ENCODE measurements at regions of chr12 and their contacts with region 1.

Region 1: GRCh38 chr12:32139064-32139421 is 32.4 kb downstream of the BICD1 start:
- DNase-seq: peak; percentile 89
- ATAC-seq: peak; percentile 84
- H3K4me3 ChIP-seq: peak overlapping the region; percentile 32 to 72 (median 55)
- H3K4me3 Mint-ChIP-seq: peak overlapping the region; percentile 95
- H3K27ac ChIP-seq: peak overlapping the region; percentile 95 to 97
- H3K27ac Mint-ChIP-seq: peak overlapping the region; percentile 99
- H3K4me1 ChIP-seq: peaks cover 31 to 39% of the 10 kb centered on the region in 2 donors
- H3K4me1 Mint-ChIP-seq: peaks cover 57% of the 10 kb centered on the region
- H3K27me3 ChIP-seq: no peaks in the 10 kb centered on the region
- H3K27me3 Mint-ChIP-seq: no peaks in the 10 kb centered on the region
- CTCF ChIP-seq: no peak

Region 2: DNA sequence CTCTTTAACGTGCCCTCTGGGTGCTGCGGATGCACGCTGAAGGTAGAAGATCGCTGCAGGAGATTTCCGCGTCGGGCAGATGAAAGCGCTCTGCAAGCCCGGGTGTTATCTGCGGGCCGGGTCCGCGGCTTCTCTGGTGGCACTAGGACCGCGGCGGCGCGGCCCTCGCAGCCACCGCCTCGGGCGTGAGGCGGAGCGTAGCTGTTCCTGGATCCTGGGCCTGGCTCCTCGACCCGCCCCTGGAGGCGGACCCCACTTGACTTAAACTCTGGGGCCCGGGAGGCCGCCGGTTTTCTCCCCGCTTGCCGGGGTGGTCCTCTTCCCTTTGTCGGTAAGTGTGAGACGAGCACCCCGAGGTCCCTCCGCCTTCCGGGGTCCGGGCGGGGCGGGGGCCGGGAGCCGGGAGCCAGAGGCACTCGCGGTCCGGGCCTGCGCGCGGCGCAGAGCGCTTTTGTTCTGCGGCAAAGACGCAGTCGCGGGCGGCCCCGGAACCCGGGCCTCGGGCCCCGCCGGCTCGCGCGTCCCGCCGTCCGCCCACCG is 179.8 kb before region 1 on chr12 and contains the start of gene RESF1:
- CTCF ChIA-PET with region 1: no interaction called
- POLR2A ChIA-PET with region 1: no interaction called
- intact Hi-C with region 1: loop called (anchors 10 kb)
- DNase-seq: peak; percentile 91
- ATAC-seq: peak; percentile 85
- H3K4me3 ChIP-seq: peak within 1 kb of the TSS; percentile 65 to 98 (median 70)
- H3K4me3 Mint-ChIP-seq: peak within 1 kb of the TSS; percentile 96
- H3K27ac ChIP-seq: peak within 1 kb of the TSS; percentile 79 to 82
- H3K27ac Mint-ChIP-seq: peak within 1 kb of the TSS; percentile 96
- H3K4me1 ChIP-seq: peaks cover 49 to 50% of the 10 kb centered on the region in 2 donors
- H3K4me1 Mint-ChIP-seq: peaks cover 68% of the 10 kb centered on the region
- H3K27me3 ChIP-seq: no peaks in the 10 kb centered on the region
- H3K27me3 Mint-ChIP-seq: no peaks in the 10 kb centered on the region
- CTCF ChIP-seq: no peak
- total RNA-seq, gene RESF1: 350 and 352 TPM in 2 replicates

Region 3: DNA sequence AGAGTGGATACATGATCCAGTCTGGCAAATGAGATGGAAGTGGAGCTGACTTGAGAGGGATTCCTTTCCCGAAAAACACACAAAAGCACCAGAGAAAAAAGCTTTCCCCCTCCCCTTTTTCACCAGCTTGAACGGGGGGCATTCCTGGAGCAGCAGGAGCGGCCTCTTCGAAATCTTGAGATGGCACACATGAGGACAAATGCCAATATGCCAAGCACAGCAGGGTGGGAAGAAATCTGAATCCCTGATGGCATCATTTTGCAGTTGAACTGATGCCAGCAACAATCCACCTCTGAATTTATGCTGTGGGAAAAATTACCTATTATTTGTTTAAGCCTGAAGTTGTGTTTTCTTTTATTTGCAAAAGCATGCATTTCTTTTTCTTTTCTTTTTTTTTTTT is 62.1 kb before region 1 on chr12:
- CTCF ChIA-PET with region 1: no interaction called
- POLR2A ChIA-PET with region 1: no interaction called
- intact Hi-C with region 1: no loop called
- DNase-seq: no peak
- ATAC-seq: no peak
- H3K4me3 ChIP-seq: no peak overlapping the region
- H3K4me3 Mint-ChIP-seq: no peak overlapping the region
- H3K27ac ChIP-seq: no peak overlapping the region
- H3K27ac Mint-ChIP-seq: no peak overlapping the region
- H3K4me1 ChIP-seq: no peaks in the 10 kb centered on the region
- H3K4me1 Mint-ChIP-seq: no peaks in the 10 kb centered on the region
- H3K27me3 ChIP-seq: no peaks in the 10 kb centered on the region
- H3K27me3 Mint-ChIP-seq: no peaks in the 10 kb centered on the region
- CTCF ChIP-seq: no peak

Region 4: GRCh38 chr12:32106517-32107358 is 32.3 kb before region 1 on chr12 and contains the start of gene BICD1:
- CTCF ChIA-PET with region 1: interaction called, 5 read pairs
- POLR2A ChIA-PET with region 1: interaction called, 8 read pairs
- intact Hi-C with region 1: loop called (anchors 1 kb)
- DNase-seq: peak; percentile 80
- ATAC-seq: peak; percentile 82
- H3K4me3 ChIP-seq: peak within 1 kb of the TSS; percentile 43 to 95 (median 80)
- H3K4me3 Mint-ChIP-seq: peak within 1 kb of the TSS; percentile 93
- H3K27ac ChIP-seq: peak within 1 kb of the TSS; percentile 15 to 86
- H3K27ac Mint-ChIP-seq: peak within 1 kb of the TSS; percentile 97
- H3K4me1 ChIP-seq: peaks cover 19 to 20% of the 10 kb centered on the region in 2 donors
- H3K4me1 Mint-ChIP-seq: peaks cover 30% of the 10 kb centered on the region
- H3K27me3 ChIP-seq: no peaks in the 10 kb centered on the region
- H3K27me3 Mint-ChIP-seq: no peaks in the 10 kb centered on the region
- CTCF ChIP-seq: peak; percentile 23
- total RNA-seq, gene BICD1: 93.1 and 93.5 TPM in 2 replicates

Region 5: GRCh38 chr12:32257695-32258496 is 118.9 kb after region 1 on chr12:
- CTCF ChIA-PET with region 1: no interaction called
- POLR2A ChIA-PET with region 1: no interaction called
- intact Hi-C with region 1: no loop called
- DNase-seq: no peak
- ATAC-seq: no peak
- H3K4me3 ChIP-seq: no peak overlapping the region
- H3K4me3 Mint-ChIP-seq: no peak overlapping the region
- H3K27ac ChIP-seq: no peak overlapping the region
- H3K27ac Mint-ChIP-seq: no peak overlapping the region
- H3K4me1 ChIP-seq: peaks cover 9 to 11% of the 10 kb centered on the region in 2 donors
- H3K4me1 Mint-ChIP-seq: peaks cover 31% of the 10 kb centered on the region
- H3K27me3 ChIP-seq: no peaks in the 10 kb centered on the region
- H3K27me3 Mint-ChIP-seq: no peaks in the 10 kb centered on the region
- CTCF ChIP-seq: no peak

Region 6: DNA sequence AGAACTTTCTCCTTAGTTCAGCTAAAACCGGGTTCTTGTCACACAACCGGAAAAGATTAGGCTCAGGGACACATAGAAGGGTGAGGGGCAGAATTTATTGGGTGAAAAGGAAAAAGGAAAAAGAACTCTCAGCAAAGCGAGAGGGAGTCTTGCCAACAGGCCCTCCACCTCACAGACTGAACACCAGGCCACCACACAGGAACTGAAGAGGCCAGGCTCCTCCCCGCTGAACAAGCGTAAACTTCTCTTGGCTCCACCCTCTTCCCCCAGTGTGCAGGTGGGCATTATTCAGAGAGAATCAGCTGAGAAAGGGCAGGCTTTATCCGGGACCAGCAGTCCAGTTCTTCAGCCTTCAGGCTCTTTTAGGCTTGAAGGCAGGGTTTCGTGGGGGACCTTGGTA is 134.7 kb after region 1 on chr12:
- CTCF ChIA-PET with region 1: no interaction called
- POLR2A ChIA-PET with region 1: interaction called, 4 read pairs
- intact Hi-C with region 1: loop called (anchors 1 kb)
- DNase-seq: peak; percentile 81
- ATAC-seq: peak; percentile 96
- H3K4me3 ChIP-seq: peak overlapping the region in 2 of 5 experiments; percentile 23 to 28
- H3K4me3 Mint-ChIP-seq: peak overlapping the region; percentile 79
- H3K27ac ChIP-seq: peak overlapping the region; percentile 88 to 95
- H3K27ac Mint-ChIP-seq: peak overlapping the region; percentile 98
- H3K4me1 ChIP-seq: peaks cover 38 to 40% of the 10 kb centered on the region in 2 donors
- H3K4me1 Mint-ChIP-seq: peaks cover 36% of the 10 kb centered on the region
- H3K27me3 ChIP-seq: no peaks in the 10 kb centered on the region
- H3K27me3 Mint-ChIP-seq: no peaks in the 10 kb centered on the region
- CTCF ChIP-seq: no peak

Region 7: DNA sequence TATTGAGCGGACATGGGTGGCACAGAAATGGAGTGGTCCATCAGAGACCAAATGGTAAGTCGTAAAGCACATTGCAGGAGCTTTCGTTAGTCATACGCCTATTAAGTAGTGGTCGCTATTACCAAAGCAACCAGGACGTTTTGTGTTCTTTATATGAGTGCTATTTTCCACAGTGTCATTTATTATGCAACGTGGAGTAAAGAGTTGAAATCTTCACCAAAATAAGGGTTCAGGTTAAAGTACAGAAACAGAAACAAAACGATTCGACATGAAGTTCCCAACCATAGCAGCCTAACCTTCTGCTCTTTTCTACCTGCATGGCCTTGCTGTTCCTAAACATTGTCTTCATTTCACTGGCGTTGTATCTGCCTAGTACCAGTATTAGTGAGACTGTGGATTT is 240.2 kb after region 1 on chr12:
- CTCF ChIA-PET with region 1: no interaction called
- POLR2A ChIA-PET with region 1: no interaction called
- intact Hi-C with region 1: no loop called
- DNase-seq: no peak
- ATAC-seq: no peak
- H3K4me3 ChIP-seq: no peak overlapping the region
- H3K4me3 Mint-ChIP-seq: no peak overlapping the region
- H3K27ac ChIP-seq: no peak overlapping the region
- H3K27ac Mint-ChIP-seq: no peak overlapping the region
- H3K4me1 ChIP-seq: no peaks in the 10 kb centered on the region
- H3K4me1 Mint-ChIP-seq: no peaks in the 10 kb centered on the region
- H3K27me3 ChIP-seq: no peaks in the 10 kb centered on the region
- H3K27me3 Mint-ChIP-seq: no peaks in the 10 kb centered on the region
- CTCF ChIP-seq: no peak

Region 8: DNA sequence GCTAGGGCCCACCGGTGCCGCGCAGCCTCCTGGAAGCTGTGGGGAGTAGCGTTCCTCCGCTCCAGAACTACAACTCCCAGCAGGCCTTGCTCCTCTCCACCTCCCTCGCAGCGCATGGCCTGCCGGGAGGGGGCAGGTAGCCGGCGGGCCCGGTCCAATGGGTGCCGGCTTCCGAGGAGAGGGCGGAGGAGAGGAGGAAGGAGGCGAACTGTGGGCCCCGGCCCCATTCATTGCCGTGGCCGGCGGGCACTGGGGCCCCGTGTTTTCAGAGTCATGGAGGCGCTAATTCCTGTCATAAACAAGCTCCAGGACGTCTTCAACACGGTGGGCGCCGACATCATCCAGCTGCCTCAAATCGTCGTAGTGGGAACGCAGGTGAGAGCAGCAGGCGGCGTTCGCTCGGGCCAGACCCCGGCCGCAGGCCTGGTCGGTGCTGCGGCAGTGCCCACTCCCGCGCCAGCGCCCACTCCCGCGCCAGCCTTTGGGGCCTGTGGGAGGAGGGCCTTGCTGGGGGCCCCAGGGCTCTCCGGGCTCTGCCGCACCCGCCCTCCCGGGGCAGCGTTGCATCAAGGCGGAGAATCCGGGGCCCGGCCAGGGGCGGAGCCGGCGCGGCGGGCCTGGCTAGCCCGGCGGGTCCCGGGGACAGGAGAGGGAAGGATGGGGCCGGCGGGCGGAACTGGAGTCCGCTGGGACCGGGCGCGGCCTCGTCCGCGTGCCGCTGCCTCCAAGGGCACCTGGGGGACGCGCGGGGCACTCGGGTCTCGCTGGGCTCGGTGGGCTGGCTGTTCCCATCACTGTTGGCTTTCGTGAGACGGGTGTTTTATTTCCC is 540.3 kb after region 1 on chr12 and contains the start of gene DNM1L:
- CTCF ChIA-PET with region 1: no interaction called
- POLR2A ChIA-PET with region 1: no interaction called
- intact Hi-C with region 1: loop called (anchors 10 kb)
- DNase-seq: peak; percentile 93
- ATAC-seq: peak; percentile 96
- H3K4me3 ChIP-seq: peak within 1 kb of the TSS; percentile 62 to 92 (median 86)
- H3K4me3 Mint-ChIP-seq: peak within 1 kb of the TSS; percentile 93
- H3K27ac ChIP-seq: peak within 1 kb of the TSS; percentile 63 to 79
- H3K27ac Mint-ChIP-seq: peak within 1 kb of the TSS; percentile 90
- H3K4me1 ChIP-seq: peaks cover 14 to 23% of the 10 kb centered on the region in 2 donors
- H3K4me1 Mint-ChIP-seq: peaks cover 34% of the 10 kb centered on the region
- H3K27me3 ChIP-seq: no peaks in the 10 kb centered on the region
- H3K27me3 Mint-ChIP-seq: no peaks in the 10 kb centered on the region
- CTCF ChIP-seq: no peak
- total RNA-seq, gene DNM1L: 74.2 and 76.0 TPM in 2 replicates

Measured in B cell (primary cell).